ENCODE measurements at regions of chr16 and their contacts with region 1.

Region 1: DNA sequence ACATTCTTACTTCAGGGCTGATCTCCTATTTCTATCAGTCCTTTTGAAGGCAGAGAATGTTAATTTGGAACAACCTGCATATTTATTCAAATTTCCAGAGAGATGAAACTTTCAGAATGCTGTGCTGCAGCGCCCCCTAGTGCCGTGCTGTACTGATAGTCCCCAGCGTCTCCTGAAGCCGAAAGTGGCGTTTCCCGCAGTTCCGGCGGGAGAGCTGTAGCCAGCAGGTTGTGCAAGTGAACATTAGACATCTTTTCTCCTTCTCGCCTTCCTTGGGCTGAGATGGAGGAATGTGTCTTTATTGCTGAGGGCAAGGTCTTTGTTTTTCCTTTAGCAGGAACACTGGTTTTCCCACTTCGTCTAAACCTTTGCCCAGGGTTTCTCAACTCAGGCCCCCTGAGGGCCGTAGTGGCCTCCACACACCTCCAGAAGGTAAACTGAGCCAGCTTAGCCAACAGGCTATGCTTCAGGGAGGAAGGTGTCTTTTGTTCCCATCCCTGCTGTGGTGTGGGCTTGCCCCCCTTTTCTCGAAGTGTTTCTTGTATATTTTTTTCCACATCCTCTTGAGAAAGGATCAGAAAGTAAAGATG is 26.4 kb downstream of the USP10 start:
- DNase-seq: no peak
- ATAC-seq: peak; percentile 66
- H3K4me3 ChIP-seq: peak overlapping the region; percentile 66
- H3K27ac ChIP-seq: peak overlapping the region; percentile 66
- H3K4me1 ChIP-seq: peaks cover 44% of the 10 kb centered on the region
- H3K27me3 ChIP-seq: no peaks in the 10 kb centered on the region
- CTCF ChIP-seq: peak; percentile 90 to 96 (median 91)
- EP300 ChIP-seq: 0 out of 4 replicates have a peak, but pooled peaks of 1 of the 2 experiments have one; percentile 18
- POLR2A ChIP-seq: peak; percentile 32; the same call in 1 of the 2 replicates
- RAD21 ChIP-seq: peak; percentile 84

Region 2: GRCh38 chr16:84599521-84600202 is 126.5 kb before region 1 on chr16:
- CTCF ChIA-PET with region 1: interaction called, 8 read pairs
- POLR2A ChIA-PET with region 1: interaction called, 5 read pairs
- RAD21 ChIA-PET with region 1: interaction called, 8 read pairs
- SMC1A ChIA-PET with region 1: interaction called, 15 read pairs
- in situ Hi-C with region 1: no loop called
- intact Hi-C with region 1: no loop called
- DNase-seq: no peak
- ATAC-seq: peak; percentile 35
- H3K4me3 ChIP-seq: peak overlapping the region; percentile 69
- H3K27ac ChIP-seq: peak overlapping the region; percentile 100
- H3K4me1 ChIP-seq: peaks cover 79% of the 10 kb centered on the region
- H3K27me3 ChIP-seq: no peaks in the 10 kb centered on the region
- CTCF ChIP-seq: no peak
- EP300 ChIP-seq: peak in 1 of 2 experiments; percentile 18; a peak in 1 of 4 replicates
- POLR2A ChIP-seq: peak; percentile 64
- RAD21 ChIP-seq: no peak

Region 3: DNA sequence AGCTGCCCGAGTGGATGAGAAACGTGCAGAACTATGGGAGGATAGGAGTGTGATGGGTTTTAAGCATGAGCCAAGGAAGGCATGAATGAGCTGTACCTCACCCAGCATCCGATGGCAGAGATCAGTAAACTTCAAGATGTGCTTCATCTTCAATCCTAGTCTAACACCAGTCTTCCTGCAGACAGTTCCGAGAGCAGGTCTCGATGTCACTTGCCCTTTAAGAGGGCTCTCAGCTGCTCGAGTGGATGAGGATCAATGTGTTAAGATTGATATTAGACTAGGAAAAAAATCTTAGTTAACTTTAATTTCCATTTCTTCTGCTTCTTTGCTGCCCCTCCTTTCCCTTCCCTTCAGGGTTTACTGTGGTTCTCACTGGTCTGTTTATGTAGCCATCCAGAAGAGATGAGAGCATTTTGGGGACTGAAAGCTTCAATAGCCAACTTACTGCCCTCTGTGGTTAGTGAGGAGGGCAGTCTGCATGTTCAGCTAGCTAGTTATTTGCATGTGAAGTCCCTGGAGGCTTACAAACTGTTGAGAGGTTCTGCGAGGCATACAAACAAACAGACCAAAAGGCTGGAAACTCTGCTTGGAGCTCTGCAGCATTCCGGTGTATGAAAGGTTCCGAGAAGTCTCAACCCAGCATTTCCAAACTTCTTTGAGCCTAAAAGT is 62.6 kb before region 1 on chr16:
- CTCF ChIA-PET with region 1: interaction called, 38 read pairs
- POLR2A ChIA-PET with region 1: interaction called, 4 read pairs
- RAD21 ChIA-PET with region 1: interaction called, 18 read pairs
- SMC1A ChIA-PET with region 1: interaction called, 65 read pairs
- in situ Hi-C with region 1: no loop called
- intact Hi-C with region 1: no loop called
- DNase-seq: peak; percentile 76
- ATAC-seq: peak; percentile 96
- H3K4me3 ChIP-seq: no peak overlapping the region
- H3K27ac ChIP-seq: 0 out of 2 replicates have a peak overlapping the region, but pooled peaks have one; percentile 38
- H3K4me1 ChIP-seq: peaks cover 22% of the 10 kb centered on the region
- H3K27me3 ChIP-seq: no peaks in the 10 kb centered on the region
- CTCF ChIP-seq: no peak
- EP300 ChIP-seq: no peak
- POLR2A ChIP-seq: 0 out of 2 replicates have a peak, but pooled peaks have one; percentile 18
- RAD21 ChIP-seq: no peak

Region 4: DNA sequence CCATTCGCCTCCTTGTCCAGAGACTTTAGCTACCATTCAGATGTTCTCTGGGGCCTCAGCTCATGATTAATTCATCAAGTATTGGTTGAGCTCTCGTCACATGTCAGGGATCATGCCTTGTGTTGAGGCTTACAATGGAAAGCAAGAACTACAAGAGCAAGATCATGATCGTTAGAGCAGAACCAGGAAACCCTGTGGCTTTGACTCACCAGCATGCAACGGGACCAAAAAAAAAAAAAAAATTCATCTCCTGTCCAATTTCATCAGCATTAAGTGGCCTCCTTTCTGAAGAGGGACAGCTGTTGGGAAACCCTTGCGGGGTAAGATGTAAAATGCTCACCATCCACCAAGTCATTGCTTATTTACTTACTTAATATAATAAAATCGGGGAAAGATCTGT is 38.5 kb before region 1 on chr16:
- CTCF ChIA-PET with region 1: interaction called, 19 read pairs
- POLR2A ChIA-PET with region 1: interaction called, 6 read pairs
- RAD21 ChIA-PET with region 1: interaction called, 3 read pairs
- SMC1A ChIA-PET with region 1: interaction called, 7 read pairs
- in situ Hi-C with region 1: no loop called
- intact Hi-C with region 1: no loop called
- DNase-seq: peak; percentile 76
- ATAC-seq: peak; percentile 96
- H3K4me3 ChIP-seq: no peak overlapping the region
- H3K27ac ChIP-seq: peak overlapping the region; percentile 38; the same call in 1 of the 2 replicates
- H3K4me1 ChIP-seq: peaks cover 10% of the 10 kb centered on the region
- H3K27me3 ChIP-seq: no peaks in the 10 kb centered on the region
- CTCF ChIP-seq: no peak
- EP300 ChIP-seq: no peak
- POLR2A ChIP-seq: no peak
- RAD21 ChIP-seq: no peak

Region 5: DNA sequence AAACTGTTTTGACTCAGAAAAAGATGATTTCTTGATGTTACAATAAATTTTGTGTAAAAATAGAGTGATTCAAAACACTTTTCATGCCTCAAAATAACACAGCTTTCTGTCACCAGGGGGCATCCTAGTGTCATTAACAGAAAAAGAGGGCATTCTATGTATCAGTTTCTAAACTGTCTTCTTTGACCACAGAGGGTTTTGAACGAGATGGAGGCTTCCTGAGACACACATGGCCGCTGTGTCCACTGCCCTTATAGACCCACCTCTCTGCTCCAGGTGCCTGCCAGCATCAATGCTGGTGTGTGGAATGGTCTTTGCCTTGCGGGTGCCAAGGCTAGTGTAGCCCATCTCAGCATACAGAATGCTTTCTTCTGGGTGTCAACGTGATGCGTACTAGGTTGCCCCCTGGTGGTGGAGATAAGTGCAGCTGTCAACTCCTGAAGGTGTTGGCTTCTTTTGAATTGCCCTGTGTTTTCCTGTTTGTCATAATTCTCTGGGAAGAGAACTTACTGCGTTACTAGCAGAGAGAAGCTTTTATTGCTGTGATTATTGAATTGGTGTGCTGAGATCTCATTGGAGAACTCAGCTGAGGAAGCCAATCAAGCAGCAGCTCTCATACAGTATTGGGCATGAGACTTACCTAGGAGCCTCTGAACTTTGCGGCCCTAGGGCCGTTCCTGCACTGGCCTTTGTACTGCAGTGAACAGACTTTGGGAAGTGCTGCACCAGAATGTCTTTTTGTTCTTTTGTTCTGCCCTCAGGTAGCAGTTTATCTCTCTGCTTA is 12.3 kb after region 1 on chr16:
- CTCF ChIA-PET with region 1: interaction called, 196 read pairs
- POLR2A ChIA-PET with region 1: interaction called, 8 read pairs
- RAD21 ChIA-PET with region 1: interaction called, 35 read pairs
- SMC1A ChIA-PET with region 1: interaction called, 52 read pairs
- in situ Hi-C with region 1: no loop called
- intact Hi-C with region 1: no loop called
- DNase-seq: peak; percentile 71
- ATAC-seq: peak; percentile 95
- H3K4me3 ChIP-seq: no peak overlapping the region
- H3K27ac ChIP-seq: no peak overlapping the region
- H3K4me1 ChIP-seq: peaks cover 14% of the 10 kb centered on the region
- H3K27me3 ChIP-seq: no peaks in the 10 kb centered on the region
- CTCF ChIP-seq: peak; percentile 82 to 96 (median 83)
- EP300 ChIP-seq: no peak
- POLR2A ChIP-seq: no peak
- RAD21 ChIP-seq: peak; percentile 62

Region 6: GRCh38 chr16:84832488-84833143 is 106.4 kb after region 1 on chr16:
- CTCF ChIA-PET with region 1: no interaction called
- POLR2A ChIA-PET with region 1: no interaction called
- RAD21 ChIA-PET with region 1: no interaction called
- SMC1A ChIA-PET with region 1: no interaction called
- in situ Hi-C with region 1: no loop called
- intact Hi-C with region 1: no loop called
- DNase-seq: no peak
- ATAC-seq: no peak
- H3K4me3 ChIP-seq: no peak overlapping the region
- H3K27ac ChIP-seq: no peak overlapping the region
- H3K4me1 ChIP-seq: no peaks in the 10 kb centered on the region
- H3K27me3 ChIP-seq: no peaks in the 10 kb centered on the region; a peak in 2 of 4 replicates
- CTCF ChIP-seq: no peak
- EP300 ChIP-seq: no peak
- POLR2A ChIP-seq: no peak
- RAD21 ChIP-seq: no peak

Measured in GM12878 (cell line).